PC-9 (cell line): ENCODE measurements at regions of chrX and their contacts with region 1.

Region 1: GRCh38 chrX:154918060-154918483 is 31.9 kb downstream of the F8A1 start:
- DNase-seq: peak; percentile 60 to 69
- H3K4me3 ChIP-seq: peak overlapping the region; percentile 35; the same call in 1 of the 2 replicates
- H3K27ac ChIP-seq: no peak overlapping the region
- H3K4me1 ChIP-seq: no peaks in the 10 kb centered on the region
- H3K27me3 ChIP-seq: no peaks in the 10 kb centered on the region
- CTCF ChIP-seq: peak; percentile 75

Region 2: DNA sequence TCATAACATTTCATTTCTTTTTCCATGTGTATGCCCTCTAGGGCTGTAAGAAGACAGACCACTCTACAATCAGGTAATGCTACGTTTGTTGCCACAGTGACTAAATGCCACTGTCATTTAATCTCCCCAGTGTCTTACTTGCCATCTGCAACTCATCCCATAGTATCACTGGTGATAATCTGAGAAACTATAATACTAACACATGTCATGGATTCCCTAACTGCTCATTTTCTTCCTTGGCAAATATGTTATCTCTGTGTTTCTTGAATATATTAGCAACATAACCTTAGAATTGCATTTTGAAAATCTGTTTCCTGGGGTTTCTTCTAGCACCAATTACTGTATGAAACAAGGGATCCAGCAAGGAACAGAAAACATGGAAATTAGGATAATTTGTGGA is 25.8 kb before region 1 on chrX:
- CTCF ChIA-PET with region 1: no interaction called
- POLR2A ChIA-PET with region 1: no interaction called
- intact Hi-C with region 1: no loop called
- DNase-seq: no peak
- H3K4me3 ChIP-seq: no peak overlapping the region
- H3K27ac ChIP-seq: no peak overlapping the region
- H3K4me1 ChIP-seq: no peaks in the 10 kb centered on the region
- H3K27me3 ChIP-seq: peaks cover 8% of the 10 kb centered on the region; the same call in 1 of the 2 replicates
- CTCF ChIP-seq: no peak

Region 3: DNA sequence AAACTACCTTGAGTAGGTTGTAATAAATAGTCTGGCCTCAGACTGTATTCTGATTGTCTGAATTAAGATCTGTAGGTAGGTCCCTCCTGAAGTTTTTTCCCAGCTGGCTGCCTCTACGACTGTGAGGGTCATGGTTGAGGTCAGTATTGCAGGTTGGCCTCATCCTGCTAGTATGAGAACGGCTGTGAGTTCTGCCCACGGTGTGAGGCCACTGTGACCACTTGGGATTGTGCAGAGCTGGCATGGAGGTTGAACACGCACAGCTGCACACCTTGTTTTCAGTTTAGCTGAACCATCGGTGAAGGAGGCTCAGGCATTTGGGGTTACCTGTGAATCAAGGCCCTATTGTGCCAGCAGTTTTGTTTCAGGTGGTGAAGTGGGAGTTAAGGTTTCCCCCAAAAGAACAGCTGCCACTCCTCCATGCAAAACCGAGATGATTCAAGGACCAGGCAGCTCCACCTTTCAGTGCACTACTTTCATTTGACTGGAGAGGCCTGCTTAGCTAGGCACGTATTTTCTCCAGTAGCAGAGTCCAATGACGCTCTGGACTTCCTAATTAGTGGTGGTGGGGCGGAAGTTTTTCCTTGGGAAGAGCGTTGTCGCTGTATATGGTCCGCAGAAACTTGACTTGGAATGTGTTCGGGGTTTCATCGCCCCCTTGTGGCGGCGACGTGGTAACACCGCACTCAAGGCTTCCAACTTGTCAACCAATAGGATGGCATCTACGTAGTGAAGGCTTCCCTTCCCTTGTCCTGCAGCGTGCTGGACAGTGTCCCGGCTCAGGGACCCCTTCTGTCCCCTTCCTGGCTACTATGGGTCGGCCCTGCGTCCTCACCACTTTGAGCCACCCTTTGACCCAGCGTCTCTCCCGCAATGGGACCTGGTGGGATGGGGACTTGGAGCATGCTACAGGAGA is 139.1 kb after region 1 on chrX:
- CTCF ChIA-PET with region 1: no interaction called
- POLR2A ChIA-PET with region 1: no interaction called
- intact Hi-C with region 1: loop called (anchors 2 kb)
- DNase-seq: peak in 1 of 2 experiments; percentile 66
- H3K4me3 ChIP-seq: no peak overlapping the region
- H3K27ac ChIP-seq: no peak overlapping the region
- H3K4me1 ChIP-seq: no peaks in the 10 kb centered on the region
- H3K27me3 ChIP-seq: no peaks in the 10 kb centered on the region
- CTCF ChIP-seq: peak; percentile 78

Region 4: GRCh38 chrX:155179346-155179986 is 261.4 kb after region 1 on chrX:
- CTCF ChIA-PET with region 1: no interaction called
- POLR2A ChIA-PET with region 1: no interaction called
- intact Hi-C with region 1: loop called (anchors 5 kb)
- DNase-seq: no peak
- H3K4me3 ChIP-seq: no peak overlapping the region
- H3K27ac ChIP-seq: no peak overlapping the region
- H3K4me1 ChIP-seq: no peaks in the 10 kb centered on the region
- H3K27me3 ChIP-seq: no peaks in the 10 kb centered on the region
- CTCF ChIP-seq: 0 out of 2 replicates have a peak, but pooled peaks have one; percentile 30